K562 (cell line): ENCODE measurements at regions of chr10 and their contacts with region 1.

Region 1: GRCh38 chr10:775245-776075 is 86.0 kb upstream of the DIP2C start:
- DNase-seq: no peak
- ATAC-seq: no peak; the same call in 2 of the 3 replicates
- H3K4me3 ChIP-seq: no peak overlapping the region
- H3K27ac ChIP-seq: no peak overlapping the region
- H3K4me1 ChIP-seq: peaks cover 0 to 16% of the 10 kb centered on the region in 2 experiments; a peak in 2 of 5 replicates
- H3K27me3 ChIP-seq: peaks cover 53 to 83% of the 10 kb centered on the region in 2 experiments
- CTCF ChIP-seq: no peak
- EP300 ChIP-seq: no peak
- POLR2A ChIP-seq: no peak
- RAD21 ChIP-seq: no peak

Region 2: DNA sequence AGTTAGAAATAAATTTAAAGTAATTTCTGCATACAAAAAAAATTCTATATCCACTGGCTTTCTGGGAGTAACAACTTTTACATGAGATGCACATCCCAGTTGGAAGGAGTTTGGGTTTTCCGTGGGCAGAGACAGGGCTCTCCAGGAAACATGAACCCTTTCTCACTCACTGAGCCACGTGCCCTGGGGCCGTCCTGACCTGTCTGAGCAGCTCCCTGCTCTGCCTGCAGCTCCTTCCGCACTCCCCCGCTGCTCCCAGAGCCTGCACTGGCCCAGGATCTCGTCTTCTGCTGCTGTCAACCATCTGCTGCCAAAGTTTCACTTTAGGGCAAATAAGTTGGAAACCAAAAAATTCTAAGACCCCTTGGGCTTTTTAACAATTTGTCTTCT is 255.1 kb before region 1 on chr10:
- CTCF ChIA-PET with region 1: no interaction called
- POLR2A ChIA-PET with region 1: interaction called, 4 read pairs
- in situ Hi-C with region 1: loop called (anchors 10 kb)
- intact Hi-C with region 1: no loop called
- DNase-seq: no peak
- ATAC-seq: no peak
- H3K4me3 ChIP-seq: no peak overlapping the region
- H3K27ac ChIP-seq: no peak overlapping the region
- H3K4me1 ChIP-seq: no peaks in the 10 kb centered on the region
- H3K27me3 ChIP-seq: peaks cover 10 to 42% of the 10 kb centered on the region in 2 experiments; a peak in 4 of 5 replicates
- CTCF ChIP-seq: no peak
- EP300 ChIP-seq: no peak
- POLR2A ChIP-seq: no peak
- RAD21 ChIP-seq: no peak